ENCODE measurements at regions of chr11 and their contacts with region 1.

Region 1: DNA sequence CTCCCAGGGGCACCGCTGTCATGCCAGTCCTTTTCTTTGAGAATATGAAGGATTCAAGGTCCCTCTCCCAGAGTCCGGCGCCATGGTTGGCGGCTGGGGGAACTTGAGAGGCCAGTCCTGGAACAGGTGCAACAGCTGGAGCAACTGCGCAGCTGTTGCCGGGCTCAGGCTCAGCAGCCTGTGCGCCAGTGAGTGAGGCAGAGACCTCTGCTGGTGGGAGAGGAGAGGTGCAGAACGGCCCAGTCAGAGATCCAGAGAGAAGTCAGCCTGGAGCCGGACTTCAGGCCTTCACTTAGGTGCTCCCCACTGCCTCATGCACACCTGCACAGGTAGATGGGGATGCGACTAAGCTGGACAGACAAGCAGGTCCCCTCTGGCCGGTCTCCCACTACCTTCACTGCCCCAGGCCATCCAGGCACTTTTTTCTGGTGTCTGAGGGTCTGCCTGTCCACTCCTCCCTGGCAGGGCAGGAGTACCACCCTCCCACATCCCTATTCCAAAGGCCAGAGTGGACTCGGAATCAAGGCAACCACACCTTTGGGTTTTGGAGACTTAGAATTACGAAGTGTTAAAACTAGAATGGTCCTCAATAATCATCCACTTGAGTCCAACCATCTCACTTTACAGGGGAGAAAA is 4.6 kb downstream of the CHRDL2 start:
- DNase-seq: peak; percentile 86

Region 2: DNA sequence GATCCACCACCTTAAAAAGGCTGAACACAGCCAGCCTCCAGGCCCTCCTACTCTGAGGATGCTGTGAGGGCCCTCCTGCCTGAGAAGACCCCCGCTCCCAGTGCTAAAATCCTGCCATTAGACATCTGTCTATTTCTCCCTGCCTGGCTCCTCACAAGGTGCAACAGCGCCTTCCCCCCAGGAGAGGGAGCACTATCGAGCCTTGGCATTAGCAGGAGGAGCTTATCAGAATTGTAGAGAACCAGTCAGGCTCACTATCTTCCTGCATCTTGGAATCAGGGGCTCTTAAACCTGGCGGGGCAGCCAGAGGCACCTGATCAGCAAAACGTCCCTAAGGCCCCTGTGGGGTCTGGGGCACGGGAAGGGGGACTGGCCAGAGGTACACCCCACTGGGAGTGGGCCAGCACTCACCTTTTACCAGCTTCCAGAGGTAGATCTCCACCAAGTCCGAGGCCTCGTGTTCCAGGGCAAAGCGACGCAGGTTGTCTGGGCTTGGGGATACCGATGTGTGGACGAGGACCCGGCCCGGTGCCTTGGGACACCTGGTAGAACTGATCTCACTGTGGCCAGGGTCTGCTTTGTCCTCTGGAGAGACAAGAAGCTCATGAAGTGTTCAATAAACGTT is 24.2 kb before region 1 on chr11:
- CTCF ChIA-PET with region 1: interaction called, 30 read pairs
- POLR2A ChIA-PET with region 1: no interaction called
- DNase-seq: peak; percentile 84

Region 3: DNA sequence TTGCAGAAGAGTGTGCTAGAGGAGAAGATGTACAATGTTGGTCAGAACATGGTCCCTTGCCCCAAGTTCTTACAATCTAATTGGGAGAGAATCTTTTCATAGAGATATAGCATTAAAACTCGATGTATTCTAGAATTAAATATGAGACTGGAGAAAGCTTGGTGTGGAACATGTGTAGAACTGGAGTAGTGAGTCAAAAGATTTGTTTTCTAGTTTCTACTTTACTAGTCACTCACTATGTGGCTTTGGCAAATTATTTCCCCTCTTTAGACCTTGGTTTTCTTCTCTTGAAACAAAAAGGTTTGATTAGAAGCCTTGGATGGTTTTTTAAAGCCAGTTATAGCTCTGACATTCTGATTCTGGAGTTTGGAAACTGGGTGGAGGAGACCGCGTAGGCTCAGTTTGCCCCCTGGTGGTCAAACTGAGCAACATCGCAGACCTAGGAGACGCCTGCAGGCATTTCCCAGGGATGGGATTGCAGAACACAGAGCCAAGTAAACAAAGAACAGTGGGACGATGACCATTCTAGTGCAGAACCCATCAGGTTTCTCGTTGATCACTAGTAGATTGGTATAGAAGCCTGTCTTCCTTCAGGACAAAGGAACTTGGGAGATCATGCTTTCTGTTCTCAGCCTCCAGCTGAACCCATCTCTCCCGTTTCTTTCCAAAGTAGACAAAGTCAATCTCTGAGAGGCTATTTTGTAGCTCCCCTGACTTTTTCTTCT is 13.0 kb after region 1 on chr11:
- CTCF ChIA-PET with region 1: interaction called, 10 read pairs
- POLR2A ChIA-PET with region 1: no interaction called
- DNase-seq: peak; percentile 80

Region 4: DNA sequence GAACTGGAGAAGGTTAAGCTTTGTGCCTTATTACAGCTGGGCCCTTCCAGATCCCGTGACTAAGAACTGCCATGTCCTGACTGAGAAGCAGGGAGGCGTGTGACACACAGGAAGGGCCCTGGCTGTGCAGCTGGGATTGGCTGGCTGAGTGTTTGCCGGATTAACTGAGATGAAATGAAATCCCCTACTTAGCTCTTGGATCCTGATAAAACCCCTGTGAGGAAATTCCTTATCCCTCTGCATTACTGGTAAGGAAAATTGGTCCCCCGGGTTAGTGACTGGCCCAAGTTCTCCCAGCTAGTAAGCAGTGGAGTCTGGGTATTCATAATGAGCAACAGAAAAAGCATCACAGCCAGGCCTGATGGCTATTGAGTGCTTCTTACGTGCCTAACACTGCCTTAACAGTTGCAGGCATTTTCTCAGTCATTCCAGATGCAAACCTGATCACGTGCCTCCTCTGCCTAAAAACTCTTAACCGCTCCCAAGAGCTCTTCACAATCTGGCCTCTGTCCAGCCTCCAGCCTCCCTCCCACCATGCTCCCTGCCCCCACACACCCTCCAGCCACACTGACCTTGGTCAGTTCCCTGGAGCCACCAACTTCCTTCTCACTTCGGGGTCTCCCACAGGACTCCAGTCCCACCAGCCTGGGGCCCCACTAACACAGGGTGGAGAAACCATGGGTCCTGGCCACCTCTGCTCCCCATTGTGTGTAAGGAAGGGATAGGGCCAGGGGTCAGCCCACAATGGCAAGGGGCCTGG is 587.0 kb after region 1 on chr11:
- CTCF ChIA-PET with region 1: no interaction called
- POLR2A ChIA-PET with region 1: no interaction called
- DNase-seq: no peak